ENCODE measurements at regions of chr17 and their contacts with region 1.

Region 1: GRCh38 chr17:75632863-75633485 is at the start of gene SMIM5:
- DNase-seq: peak; percentile 87 to 99
- ATAC-seq: peak; percentile 56 to 91
- H3K4me3 ChIP-seq: no peak within 1 kb of the TSS
- H3K27ac ChIP-seq: peak within 1 kb of the TSS; percentile 56 to 86
- H3K4me1 ChIP-seq: peaks cover 19% of the 10 kb centered on the region
- CTCF ChIP-seq: peak; percentile 98
- EP300 ChIP-seq: no peak
- POLR2A ChIP-seq: no peak
- RAD21 ChIP-seq: peak; percentile 83 to 85
- polyA plus RNA-seq, gene SMIM5: 0.25 and 0.30 TPM in 2 replicates

Region 2: DNA sequence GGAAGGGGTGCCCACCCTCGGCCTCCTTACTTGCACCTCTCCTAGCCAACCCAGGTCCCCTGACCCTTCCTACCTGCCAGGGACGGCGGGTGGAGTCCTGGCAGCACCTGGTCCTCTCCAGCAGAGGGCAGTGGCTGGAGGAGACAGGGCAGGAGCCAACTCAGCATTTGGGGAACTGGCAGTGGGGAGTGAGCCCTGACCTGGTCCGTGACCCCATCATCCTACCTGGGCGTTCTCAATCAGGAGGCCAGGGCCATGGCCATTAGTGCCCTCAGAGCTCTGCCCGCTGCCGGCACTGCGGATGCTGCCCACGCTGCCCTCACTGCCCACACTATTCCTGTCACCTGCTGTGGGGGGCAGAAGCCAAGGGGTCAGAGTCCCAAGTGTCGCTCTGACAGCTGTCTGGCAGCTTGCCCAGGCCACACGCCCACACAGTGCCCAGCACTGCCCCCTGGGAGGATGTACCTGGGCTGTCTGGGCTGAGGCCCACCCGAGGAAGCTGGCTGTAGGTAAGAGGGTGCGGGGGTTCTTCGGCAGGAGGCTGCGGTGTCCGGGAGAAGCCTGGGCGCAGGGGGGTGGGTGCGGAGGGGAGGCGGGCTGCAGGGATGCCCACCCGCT is 128.5 kb before region 1 on chr17:
- CTCF ChIA-PET with region 1: interaction called, 23 read pairs
- POLR2A ChIA-PET with region 1: no interaction called
- DNase-seq: peak; percentile 61 to 89
- ATAC-seq: peak; percentile 70 to 81
- H3K4me3 ChIP-seq: no peak overlapping the region
- H3K27ac ChIP-seq: no peak overlapping the region
- H3K4me1 ChIP-seq: peaks cover 14% of the 10 kb centered on the region
- CTCF ChIP-seq: peak; percentile 67
- EP300 ChIP-seq: no peak
- POLR2A ChIP-seq: no peak
- RAD21 ChIP-seq: peak; percentile 61 to 66

Region 3: GRCh38 chr17:75558666-75559530 is 74.1 kb before region 1 on chr17:
- CTCF ChIA-PET with region 1: interaction called, 21 read pairs
- POLR2A ChIA-PET with region 1: no interaction called
- DNase-seq: no peak
- ATAC-seq: no peak
- H3K4me3 ChIP-seq: no peak overlapping the region
- H3K27ac ChIP-seq: peak overlapping the region; percentile 93 to 95
- H3K4me1 ChIP-seq: peaks cover 67% of the 10 kb centered on the region
- CTCF ChIP-seq: no peak
- EP300 ChIP-seq: no peak
- POLR2A ChIP-seq: no peak
- RAD21 ChIP-seq: no peak

Region 4: DNA sequence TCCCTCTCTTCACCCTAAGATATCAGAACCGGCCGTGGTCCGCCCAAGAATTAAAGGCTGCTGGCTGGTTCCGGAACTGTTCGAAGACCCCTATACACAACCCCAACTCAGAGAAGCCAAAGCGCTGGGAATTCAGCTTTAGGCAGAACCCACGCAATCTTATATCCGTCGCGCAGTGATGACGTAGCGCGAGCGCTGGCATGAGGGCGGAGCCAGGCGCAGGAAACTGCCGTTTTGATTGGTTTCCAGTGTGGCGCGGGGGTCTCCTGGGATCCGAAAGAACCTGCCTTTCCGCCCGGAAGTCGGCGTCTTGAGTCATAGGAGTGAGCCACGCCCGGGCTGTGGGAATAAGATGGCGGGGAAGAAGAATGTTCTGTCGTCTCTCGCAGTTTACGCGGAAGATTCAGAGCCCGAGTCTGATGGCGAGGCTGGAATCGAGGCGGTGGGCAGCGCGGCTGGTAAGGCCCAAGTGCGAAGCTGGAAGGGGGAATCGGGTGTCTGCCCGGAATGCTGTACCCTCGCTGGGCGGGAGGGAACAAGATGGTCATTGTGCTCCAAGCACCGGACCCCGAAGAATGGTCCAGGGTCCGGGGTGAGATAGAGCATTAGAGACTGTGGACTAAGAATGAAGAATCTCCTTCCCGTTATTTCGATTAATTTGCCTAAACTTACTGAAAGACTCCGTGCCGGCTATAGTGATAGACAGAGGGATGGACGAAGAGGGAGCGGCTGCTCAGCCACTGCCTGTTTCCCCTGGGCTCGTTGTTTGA is 34.2 kb after region 1 on chr17 and contains the starts of genes RECQL5 and SAP30BP:
- CTCF ChIA-PET with region 1: interaction called, 2,254 read pairs
- POLR2A ChIA-PET with region 1: interaction called, 4 read pairs
- DNase-seq: peak; percentile 95 to 99
- ATAC-seq: peak; percentile 98 to 100
- H3K4me3 ChIP-seq: peak within 1 kb of the TSS; percentile 72
- H3K27ac ChIP-seq: peak within 1 kb of the TSS; percentile 81 to 91
- H3K4me1 ChIP-seq: peaks cover 16% of the 10 kb centered on the region
- CTCF ChIP-seq: no peak
- EP300 ChIP-seq: no peak
- POLR2A ChIP-seq: peak; percentile 55; the same call in 1 of the 2 replicates
- RAD21 ChIP-seq: no peak; a peak in 1 of 5 replicates
- polyA plus RNA-seq, gene RECQL5: 22.7 and 29.2 TPM in 2 replicates
- polyA plus RNA-seq, gene SAP30BP: 76.3 and 103 TPM in 2 replicates

Region 5: GRCh38 chr17:75707131-75707571 is 74.2 kb after region 1 on chr17:
- CTCF ChIA-PET with region 1: interaction called, 28 read pairs
- POLR2A ChIA-PET with region 1: no interaction called
- DNase-seq: peak; percentile 86 to 90
- ATAC-seq: peak; percentile 92 to 93
- H3K4me3 ChIP-seq: no peak overlapping the region
- H3K27ac ChIP-seq: peak overlapping the region; percentile 93
- H3K4me1 ChIP-seq: peaks cover 57% of the 10 kb centered on the region
- CTCF ChIP-seq: no peak
- EP300 ChIP-seq: peak; percentile 62 to 87; a peak in 3 of 5 replicates
- POLR2A ChIP-seq: no peak
- RAD21 ChIP-seq: peak in 1 of 2 experiments; percentile 62; a peak in 4 of 5 replicates

Region 6: GRCh38 chr17:75878174-75878998 is 245.4 kb after region 1 on chr17 and contains the start of gene TRIM47:
- CTCF ChIA-PET with region 1: no interaction called
- POLR2A ChIA-PET with region 1: no interaction called
- DNase-seq: peak; percentile 75 to 83
- ATAC-seq: peak; percentile 50 to 52
- H3K4me3 ChIP-seq: peak within 1 kb of the TSS; percentile 85
- H3K27ac ChIP-seq: peak within 1 kb of the TSS; percentile 92 to 94
- H3K4me1 ChIP-seq: peaks cover 30% of the 10 kb centered on the region
- CTCF ChIP-seq: peak; percentile 15; the same call in 2 of the 3 replicates
- EP300 ChIP-seq: no peak
- POLR2A ChIP-seq: peak; percentile 74
- RAD21 ChIP-seq: no peak
- polyA plus RNA-seq, gene TRIM47: 19.6 and 26.7 TPM in 2 replicates

Measured in A549 (cell line).